HepG2 (cell line): ENCODE measurements at regions of chr1 and their contacts with region 1.

Region 1: DNA sequence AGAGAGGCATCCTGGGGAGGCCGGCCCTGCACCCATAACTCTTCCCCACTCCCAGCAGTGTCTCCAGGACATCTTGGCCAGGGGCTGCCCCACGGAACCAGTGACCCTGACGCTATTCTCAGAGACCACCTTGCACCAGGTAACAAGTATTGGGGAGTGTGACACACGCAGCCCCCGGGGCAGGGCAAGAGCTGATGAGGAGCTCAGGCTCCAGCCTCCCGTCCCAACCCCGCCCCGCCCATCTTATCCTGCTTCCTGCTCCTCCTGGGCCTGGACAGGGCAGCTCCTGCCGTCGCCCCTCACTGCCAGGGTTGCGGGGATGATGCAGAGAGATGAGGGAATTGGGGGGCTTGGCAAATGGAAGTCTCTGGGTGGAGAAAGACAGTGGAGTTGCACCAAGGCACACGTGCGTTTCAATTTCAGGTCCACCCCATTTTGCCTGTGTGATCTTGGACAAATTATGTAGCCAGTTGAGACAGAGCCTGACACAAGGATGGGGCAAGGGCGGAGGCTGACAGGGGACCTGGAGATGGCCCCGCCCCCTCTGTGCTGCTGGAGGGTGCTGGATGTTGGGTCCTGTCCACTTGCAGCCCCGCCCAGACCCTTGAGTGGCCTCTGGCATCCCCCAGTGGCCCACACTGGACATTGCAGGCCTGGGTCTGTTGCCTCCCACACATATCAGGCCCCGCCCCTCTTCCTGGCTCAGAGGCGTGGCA is 10.7 kb downstream of the CLCNKA start:
- DNase-seq: peak; percentile 82
- ATAC-seq: peak; percentile 86
- H3K4me3 ChIP-seq: no peak overlapping the region
- H3K27ac ChIP-seq: no peak overlapping the region
- H3K4me1 ChIP-seq: peaks cover 11% of the 10 kb centered on the region
- H3K27me3 ChIP-seq: peaks cover 9 to 27% of the 10 kb centered on the region in 2 experiments; a peak in 4 of 5 replicates
- CTCF ChIP-seq: peak; percentile 98
- EP300 ChIP-seq: no peak
- POLR2A ChIP-seq: no peak
- RAD21 ChIP-seq: peak; percentile 91

Region 2: GRCh38 chr1:15400627-15401026 is 631.9 kb before region 1 on chr1:
- CTCF ChIA-PET with region 1: no interaction called
- POLR2A ChIA-PET with region 1: no interaction called
- in situ Hi-C with region 1: no loop called
- intact Hi-C with region 1: no loop called
- DNase-seq: no peak
- ATAC-seq: no peak
- H3K4me3 ChIP-seq: no peak overlapping the region
- H3K27ac ChIP-seq: no peak overlapping the region
- H3K4me1 ChIP-seq: peaks cover 22% of the 10 kb centered on the region
- H3K27me3 ChIP-seq: peaks cover 0 to 10% of the 10 kb centered on the region in 2 experiments; a peak in 2 of 5 replicates
- CTCF ChIP-seq: no peak
- EP300 ChIP-seq: no peak
- POLR2A ChIP-seq: no peak
- RAD21 ChIP-seq: no peak

Region 3: DNA sequence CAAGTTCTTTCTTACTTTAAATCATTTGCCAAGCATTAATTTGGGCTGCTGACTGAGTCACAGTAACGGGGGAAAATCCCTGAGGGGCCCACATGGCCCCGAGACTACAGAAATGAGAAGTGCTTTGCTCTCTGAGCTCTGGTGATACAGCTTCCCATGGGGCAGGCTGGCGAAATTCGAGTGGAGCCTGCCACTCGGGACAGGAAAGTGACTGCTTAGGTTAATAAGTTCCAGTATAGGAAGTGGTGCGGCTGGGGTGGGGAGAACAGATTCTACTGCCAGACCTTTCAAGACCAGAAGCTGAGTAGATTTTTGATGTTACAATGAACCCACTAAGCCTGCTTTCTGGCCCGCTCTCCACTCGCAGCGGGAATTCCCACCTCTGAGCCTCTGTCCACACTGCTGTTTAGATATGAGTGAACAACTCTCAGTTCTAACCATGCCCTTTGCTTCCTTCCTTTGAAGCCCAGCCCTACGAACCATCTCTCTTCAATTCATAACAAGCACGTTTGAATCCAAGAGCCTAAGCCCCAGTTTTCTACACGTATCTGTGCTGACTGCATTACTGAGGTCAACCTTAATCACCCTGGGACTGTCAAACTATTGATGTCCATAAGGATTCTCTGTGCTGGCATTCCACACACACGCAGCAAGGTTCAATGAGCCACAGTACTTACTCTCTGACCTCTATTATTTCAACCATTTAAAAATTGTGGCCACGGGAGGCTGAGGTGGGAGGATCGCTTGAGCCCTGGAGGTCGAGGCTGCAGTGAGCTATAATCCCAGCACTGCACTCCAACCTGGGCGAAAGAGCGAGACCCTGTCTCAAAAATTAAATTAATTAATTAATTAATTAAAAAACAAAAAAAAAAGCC is 66.2 kb before region 1 on chr1:
- CTCF ChIA-PET with region 1: no interaction called
- POLR2A ChIA-PET with region 1: no interaction called
- in situ Hi-C with region 1: no loop called
- intact Hi-C with region 1: no loop called
- DNase-seq: peak; percentile 20
- ATAC-seq: peak; percentile 51; the same call in 2 of the 3 replicates
- H3K4me3 ChIP-seq: no peak overlapping the region
- H3K27ac ChIP-seq: peak overlapping the region; percentile 42
- H3K4me1 ChIP-seq: peaks cover 12% of the 10 kb centered on the region; the same call in 1 of the 2 replicates
- H3K27me3 ChIP-seq: no peaks in the 10 kb centered on the region
- CTCF ChIP-seq: no peak
- EP300 ChIP-seq: no peak
- POLR2A ChIP-seq: no peak
- RAD21 ChIP-seq: no peak

Region 4: GRCh38 chr1:15994590-15995351 is 37.8 kb before region 1 on chr1:
- CTCF ChIA-PET with region 1: no interaction called
- POLR2A ChIA-PET with region 1: no interaction called
- in situ Hi-C with region 1: no loop called
- intact Hi-C with region 1: no loop called
- DNase-seq: peak; percentile 56
- ATAC-seq: peak; percentile 92
- H3K4me3 ChIP-seq: peak overlapping the region; percentile 31 to 54 (median 35); a peak in 4 of 6 replicates
- H3K27ac ChIP-seq: peak overlapping the region; percentile 23
- H3K4me1 ChIP-seq: peaks cover 40% of the 10 kb centered on the region
- H3K27me3 ChIP-seq: peaks cover 6 to 33% of the 10 kb centered on the region in 2 experiments; a peak in 4 of 5 replicates
- CTCF ChIP-seq: peak; percentile 95
- EP300 ChIP-seq: no peak
- POLR2A ChIP-seq: no peak
- RAD21 ChIP-seq: peak; percentile 90

Region 5: GRCh38 chr1:16055613-16056520 is 23.3 kb after region 1 on chr1:
- CTCF ChIA-PET with region 1: interaction called, 3 read pairs
- POLR2A ChIA-PET with region 1: no interaction called
- in situ Hi-C with region 1: no loop called
- intact Hi-C with region 1: loop called (anchors 2 kb)
- DNase-seq: peak; percentile 77
- ATAC-seq: peak; percentile 84
- H3K4me3 ChIP-seq: peak overlapping the region in 1 of 3 experiments; percentile 23; a peak in 1 of 6 replicates
- H3K27ac ChIP-seq: no peak overlapping the region
- H3K4me1 ChIP-seq: peaks cover 19% of the 10 kb centered on the region
- H3K27me3 ChIP-seq: peaks cover 5 to 28% of the 10 kb centered on the region in 2 experiments; a peak in 3 of 5 replicates
- CTCF ChIP-seq: peak; percentile 85
- EP300 ChIP-seq: no peak
- POLR2A ChIP-seq: no peak
- RAD21 ChIP-seq: peak; percentile 80